PC-9 (cell line): ENCODE measurements at regions of chr22 and their contacts with region 1.

Region 1: DNA sequence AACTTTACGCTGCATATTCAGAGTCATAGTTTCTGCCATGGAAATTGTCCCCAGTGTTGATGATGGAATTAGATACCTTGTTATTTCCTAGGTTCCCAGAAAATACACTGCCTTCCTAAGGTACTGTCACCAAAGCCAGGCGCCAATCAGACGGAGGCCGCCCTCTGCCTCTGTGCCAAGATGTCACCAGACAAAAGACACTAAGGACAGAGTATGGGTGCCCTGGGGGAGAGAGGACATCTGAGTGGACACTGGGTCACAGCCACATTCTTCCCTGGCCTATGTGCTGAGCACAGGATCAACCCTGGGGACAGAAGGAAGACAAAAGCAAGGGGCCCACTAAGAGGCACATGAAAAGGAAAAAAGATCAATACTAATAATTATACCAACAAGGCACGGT is 11.1 kb downstream of the PLA2G6 start:
- DNase-seq: no peak
- H3K4me3 ChIP-seq: no peak overlapping the region
- H3K27ac ChIP-seq: no peak overlapping the region
- H3K4me1 ChIP-seq: peaks cover 26% of the 10 kb centered on the region
- H3K27me3 ChIP-seq: no peaks in the 10 kb centered on the region
- CTCF ChIP-seq: no peak

Region 2: GRCh38 chr22:38153821-38154562 is 16.5 kb before region 1 on chr22:
- CTCF ChIA-PET with region 1: no interaction called
- POLR2A ChIA-PET with region 1: no interaction called
- intact Hi-C with region 1: no loop called
- DNase-seq: no peak
- H3K4me3 ChIP-seq: no peak overlapping the region
- H3K27ac ChIP-seq: no peak overlapping the region
- H3K4me1 ChIP-seq: no peaks in the 10 kb centered on the region
- H3K27me3 ChIP-seq: no peaks in the 10 kb centered on the region
- CTCF ChIP-seq: peak; percentile 39; the same call in 1 of the 2 replicates

Region 3: GRCh38 chr22:38201710-38202436 is 31.4 kb after region 1 on chr22 and contains the start of gene MAFF:
- CTCF ChIA-PET with region 1: no interaction called
- POLR2A ChIA-PET with region 1: no interaction called
- intact Hi-C with region 1: no loop called
- DNase-seq: peak; percentile 95 to 97
- H3K4me3 ChIP-seq: peak within 1 kb of the TSS; percentile 93
- H3K27ac ChIP-seq: peak within 1 kb of the TSS; percentile 91
- H3K4me1 ChIP-seq: peaks cover 14% of the 10 kb centered on the region
- H3K27me3 ChIP-seq: no peaks in the 10 kb centered on the region
- CTCF ChIP-seq: no peak
- total RNA-seq, gene MAFF: 27.9 and 41.8 TPM in 2 replicates

Region 4: GRCh38 chr22:38398609-38399461 is 228.3 kb after region 1 on chr22:
- CTCF ChIA-PET with region 1: interaction called, 16 read pairs
- POLR2A ChIA-PET with region 1: no interaction called
- intact Hi-C with region 1: no loop called
- DNase-seq: peak; percentile 50 to 89
- H3K4me3 ChIP-seq: peak overlapping the region; percentile 99
- H3K27ac ChIP-seq: peak overlapping the region; percentile 56
- H3K4me1 ChIP-seq: peaks cover 30% of the 10 kb centered on the region
- H3K27me3 ChIP-seq: no peaks in the 10 kb centered on the region
- CTCF ChIP-seq: no peak